ENCODE measurements at regions of chr19 and their contacts with region 1.

Region 1: DNA sequence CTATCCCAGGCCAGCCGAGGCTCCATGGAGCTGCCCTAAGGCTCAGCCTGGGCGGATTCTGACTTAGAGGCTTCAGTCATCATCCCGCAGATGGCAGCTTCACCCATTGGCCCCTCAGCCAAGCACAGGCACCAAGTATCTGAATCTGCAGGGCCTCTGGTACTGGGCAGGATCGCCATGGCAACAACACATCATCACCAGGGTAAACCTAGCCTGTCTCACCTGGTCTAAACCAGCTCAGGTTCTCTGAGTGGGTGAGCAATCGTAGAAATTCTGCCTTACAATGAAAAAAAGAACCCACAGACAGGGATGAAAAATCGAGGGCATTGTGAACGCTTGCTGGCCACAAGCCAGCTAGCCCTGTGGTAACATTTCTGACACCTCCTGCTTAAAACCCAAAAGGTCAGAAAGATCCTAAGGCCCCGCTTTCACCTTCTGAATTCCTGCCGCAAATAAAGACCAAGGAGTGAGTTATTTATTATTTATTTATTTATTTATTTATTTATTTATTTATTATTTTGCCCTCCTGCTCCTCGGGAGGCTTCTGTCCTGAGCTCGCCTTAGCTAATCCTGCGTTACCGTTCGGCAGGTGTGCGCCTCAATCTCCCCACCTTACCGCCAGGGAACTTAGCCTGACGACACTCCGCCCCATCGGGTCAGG is 12.0 kb upstream of the CEACAM21 start:
- DNase-seq: peak; percentile 74
- H3K4me3 Mint-ChIP-seq: peak overlapping the region; percentile 62
- H3K27ac Mint-ChIP-seq: peak overlapping the region; percentile 38
- H3K4me1 Mint-ChIP-seq: peaks cover 72% of the 10 kb centered on the region
- H3K27me3 Mint-ChIP-seq: no peaks in the 10 kb centered on the region

Region 2: DNA sequence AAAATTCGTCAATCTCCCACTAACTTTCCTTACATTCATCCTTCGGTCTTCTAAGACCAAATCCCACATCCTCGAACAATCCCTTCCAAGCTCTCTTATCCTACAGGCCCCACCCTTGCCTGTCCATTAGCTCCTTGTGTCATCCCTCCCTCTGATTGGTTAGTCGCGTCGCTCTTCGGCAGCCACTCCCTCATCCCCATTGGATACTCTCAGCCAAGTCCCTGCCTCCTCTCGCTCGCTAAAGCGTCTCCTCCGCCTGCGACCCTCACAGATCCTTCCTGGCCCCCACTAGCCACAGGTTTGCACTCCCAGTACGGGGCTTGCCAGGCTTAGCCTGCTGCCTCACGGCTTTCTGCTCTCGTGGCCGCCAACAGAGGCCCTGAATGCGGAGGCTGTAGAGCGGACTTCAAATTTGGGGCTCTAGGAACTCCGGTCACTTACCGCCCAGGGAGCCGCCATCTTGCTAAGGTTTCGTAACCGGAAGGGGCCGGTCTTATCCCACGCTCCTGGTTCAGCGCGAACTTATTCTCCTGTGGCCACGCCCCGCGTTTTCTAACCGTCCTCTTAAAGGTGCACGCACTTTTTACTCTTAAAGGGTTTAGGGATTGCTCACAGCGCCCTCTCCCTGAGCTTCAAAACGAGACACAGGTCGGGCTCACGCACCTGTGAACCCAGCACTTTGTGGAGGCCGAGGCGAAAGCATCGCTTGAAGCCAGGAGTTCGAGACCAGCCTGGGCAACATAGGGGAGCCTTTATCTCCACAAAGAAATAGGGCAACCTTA is 124.4 kb before region 1 on chr19 and contains the start of gene DMAC2:
- CTCF ChIA-PET with region 1: interaction called, 33 read pairs
- POLR2A ChIA-PET with region 1: interaction called, 5 read pairs
- intact Hi-C with region 1: no loop called
- DNase-seq: peak; percentile 98
- H3K4me3 Mint-ChIP-seq: no peak within 1 kb of the TSS
- H3K27ac Mint-ChIP-seq: no peak within 1 kb of the TSS
- H3K4me1 Mint-ChIP-seq: peaks cover 15% of the 10 kb centered on the region
- H3K27me3 Mint-ChIP-seq: no peaks in the 10 kb centered on the region
- total RNA-seq, gene DMAC2: 47.5 to 47.8 TPM

Region 3: GRCh38 chr19:41505105-41505504 is 58.9 kb before region 1 on chr19:
- CTCF ChIA-PET with region 1: no interaction called
- POLR2A ChIA-PET with region 1: no interaction called
- intact Hi-C with region 1: no loop called
- DNase-seq: no peak
- H3K4me3 Mint-ChIP-seq: no peak overlapping the region
- H3K27ac Mint-ChIP-seq: no peak overlapping the region
- H3K4me1 Mint-ChIP-seq: no peaks in the 10 kb centered on the region
- H3K27me3 Mint-ChIP-seq: peaks cover 28% of the 10 kb centered on the region

Region 4: DNA sequence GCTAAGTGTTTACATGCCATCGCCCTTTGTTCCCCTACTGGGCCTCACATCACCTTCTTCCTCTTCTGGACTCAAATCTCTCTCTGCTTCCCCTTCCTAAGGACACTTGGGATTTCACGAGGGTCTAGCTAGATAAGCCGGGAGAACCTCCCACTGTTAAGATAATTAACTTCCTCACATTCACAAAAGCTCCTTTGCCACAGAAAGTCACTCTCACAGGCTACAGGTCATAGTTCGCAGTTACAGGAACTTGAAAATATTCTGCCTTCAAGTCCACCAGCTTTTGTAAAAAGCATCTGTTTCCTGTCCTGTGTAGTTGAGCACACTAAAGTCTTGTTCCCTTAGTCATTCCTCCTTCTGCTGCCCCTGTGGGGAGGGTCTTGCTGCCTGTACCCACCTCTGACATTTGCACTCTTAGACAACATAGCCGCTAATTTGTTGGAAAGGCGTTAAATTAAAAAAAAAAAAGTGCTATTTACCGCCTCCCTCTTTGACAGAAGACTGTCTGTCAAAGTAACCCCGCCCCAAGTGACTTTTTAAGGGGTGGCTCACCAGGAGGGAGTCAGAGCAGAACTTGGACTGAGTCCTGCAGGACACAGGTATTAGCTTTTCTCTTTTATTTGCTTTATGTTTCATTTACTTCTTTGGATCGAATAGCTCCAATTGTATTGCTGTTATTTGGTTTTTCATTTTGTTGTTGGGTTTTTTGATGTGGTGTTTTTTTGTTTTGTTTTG is 14.9 kb before region 1 on chr19:
- CTCF ChIA-PET with region 1: interaction called, 205 read pairs
- POLR2A ChIA-PET with region 1: interaction called, 31 read pairs
- intact Hi-C with region 1: no loop called
- DNase-seq: peak; percentile 88
- H3K4me3 Mint-ChIP-seq: peak overlapping the region; percentile 98
- H3K27ac Mint-ChIP-seq: peak overlapping the region; percentile 96
- H3K4me1 Mint-ChIP-seq: peaks cover 61% of the 10 kb centered on the region
- H3K27me3 Mint-ChIP-seq: no peaks in the 10 kb centered on the region

Region 5: DNA sequence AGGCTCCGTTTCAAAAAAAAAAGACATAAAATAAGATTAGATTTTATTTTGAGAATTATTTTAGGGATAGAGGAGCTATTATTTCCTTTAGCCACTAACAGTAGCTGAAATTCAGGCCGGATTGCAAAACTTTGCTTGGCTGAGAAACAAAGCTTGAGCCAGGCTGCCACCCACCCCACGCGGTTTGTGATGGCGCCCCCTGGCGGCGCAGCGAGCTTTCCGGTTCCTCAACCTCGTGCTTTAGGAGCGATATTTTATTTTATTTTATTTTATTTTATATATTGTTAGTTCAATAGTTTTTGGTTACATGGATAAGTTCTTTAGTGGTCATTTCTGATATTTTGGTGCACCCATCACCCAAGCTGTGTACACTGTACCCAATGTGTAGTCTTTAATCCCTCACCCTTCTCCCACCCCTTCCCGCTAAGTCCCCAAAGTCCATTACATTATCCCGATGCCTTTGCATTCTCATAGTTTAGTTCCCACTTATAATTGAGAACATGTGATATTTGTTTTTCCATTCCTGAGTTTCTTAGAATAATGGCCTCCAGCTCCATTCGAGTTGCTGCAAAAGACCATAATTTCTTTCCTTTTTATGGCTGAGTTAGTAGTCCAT is 82.7 kb after region 1 on chr19:
- CTCF ChIA-PET with region 1: no interaction called
- POLR2A ChIA-PET with region 1: no interaction called
- intact Hi-C with region 1: no loop called
- DNase-seq: peak; percentile 62
- H3K4me3 Mint-ChIP-seq: no peak overlapping the region
- H3K27ac Mint-ChIP-seq: no peak overlapping the region
- H3K4me1 Mint-ChIP-seq: no peaks in the 10 kb centered on the region
- H3K27me3 Mint-ChIP-seq: peaks cover 30% of the 10 kb centered on the region

Region 6: GRCh38 chr19:41811036-41811435 is 247.1 kb after region 1 on chr19:
- CTCF ChIA-PET with region 1: no interaction called
- POLR2A ChIA-PET with region 1: no interaction called
- intact Hi-C with region 1: no loop called
- DNase-seq: no peak
- H3K4me3 Mint-ChIP-seq: no peak overlapping the region
- H3K27ac Mint-ChIP-seq: no peak overlapping the region
- H3K4me1 Mint-ChIP-seq: no peaks in the 10 kb centered on the region
- H3K27me3 Mint-ChIP-seq: peaks cover 4% of the 10 kb centered on the region